Activated naive CD4-positive, alpha-beta T cell treated with anti-CD3 and anti-CD28 coated beads for 36 hours (primary cell): ENCODE measurements at regions of chr1 and their contacts with region 1.

Region 1: GRCh38 chr1:172638885-172639831 is 19.7 kb upstream of the FASLG start:
- DNase-seq: peak; percentile 90
- H3K4me3 Mint-ChIP-seq: peak overlapping the region; percentile 42
- H3K27ac Mint-ChIP-seq: peak overlapping the region; percentile 93
- H3K4me1 Mint-ChIP-seq: peaks cover 73% of the 10 kb centered on the region
- H3K27me3 Mint-ChIP-seq: peaks cover 9% of the 10 kb centered on the region

Region 2: DNA sequence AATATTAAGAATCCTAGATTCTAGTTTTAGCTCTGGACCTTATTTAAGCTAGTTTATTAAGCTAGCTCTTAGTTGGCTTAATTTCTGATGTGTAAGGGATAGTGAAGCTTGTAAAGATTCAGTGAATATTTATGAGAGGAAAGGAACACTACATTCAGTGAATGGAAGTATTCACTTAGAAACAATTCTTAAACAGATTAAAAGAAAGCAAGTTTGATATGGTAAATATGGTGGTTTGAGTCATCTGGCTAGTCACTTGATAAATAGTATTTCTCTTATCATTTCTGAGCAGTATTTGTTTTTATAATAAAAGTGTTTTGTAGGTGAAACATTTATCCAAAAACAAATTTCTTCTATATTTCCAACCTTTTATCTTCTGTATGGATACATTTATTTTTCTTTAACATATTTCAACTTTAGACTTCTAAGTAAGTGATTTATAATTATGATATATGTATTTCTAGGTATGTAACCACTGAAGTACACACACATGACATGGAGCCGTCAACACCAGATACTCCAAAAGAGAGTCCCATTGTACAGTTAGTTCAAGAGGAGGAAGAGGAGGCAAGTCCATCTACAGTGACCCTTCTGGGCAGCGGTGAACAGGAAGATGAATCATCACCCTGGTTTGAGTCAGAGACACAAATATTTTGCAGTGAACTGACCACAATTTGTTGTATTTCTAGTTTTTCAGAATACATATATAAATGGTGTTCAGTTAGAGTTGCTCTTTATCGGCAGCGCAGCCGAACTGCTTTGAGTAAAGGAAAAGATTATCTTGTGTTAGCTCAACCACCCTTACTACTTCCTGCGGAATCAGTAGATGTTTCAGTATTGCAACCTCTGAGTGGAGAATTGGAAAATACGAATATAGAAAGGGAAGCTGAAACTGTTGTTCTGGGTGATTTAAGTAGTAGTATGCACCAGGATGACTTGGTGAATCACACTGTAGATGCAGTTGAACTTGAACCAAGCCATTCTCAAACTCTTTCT is 50.6 kb before region 1 on chr1:
- CTCF ChIA-PET with region 1: interaction called, 5 read pairs
- intact Hi-C with region 1: loop called (anchors 1 kb)
- DNase-seq: peak; percentile 14
- H3K4me3 Mint-ChIP-seq: no peak overlapping the region
- H3K27ac Mint-ChIP-seq: peak overlapping the region; percentile 16
- H3K4me1 Mint-ChIP-seq: peaks cover 23% of the 10 kb centered on the region
- H3K27me3 Mint-ChIP-seq: no peaks in the 10 kb centered on the region

Region 3: GRCh38 chr1:172662464-172663109 is 23.4 kb after region 1 on chr1:
- CTCF ChIA-PET with region 1: interaction called, 6 read pairs
- intact Hi-C with region 1: loop called (anchors 1 kb)
- DNase-seq: peak; percentile 96
- H3K4me3 Mint-ChIP-seq: peak overlapping the region; percentile 26
- H3K27ac Mint-ChIP-seq: peak overlapping the region; percentile 60
- H3K4me1 Mint-ChIP-seq: peaks cover 68% of the 10 kb centered on the region
- H3K27me3 Mint-ChIP-seq: peaks cover 3% of the 10 kb centered on the region

Region 4: GRCh38 chr1:172699111-172699510 is 60.0 kb after region 1 on chr1:
- CTCF ChIA-PET with region 1: interaction called, 3 read pairs
- intact Hi-C with region 1: loop called (anchors 1 kb)
- DNase-seq: peak; percentile 88
- H3K4me3 Mint-ChIP-seq: peak overlapping the region; percentile 36
- H3K27ac Mint-ChIP-seq: peak overlapping the region; percentile 89
- H3K4me1 Mint-ChIP-seq: peaks cover 53% of the 10 kb centered on the region
- H3K27me3 Mint-ChIP-seq: no peaks in the 10 kb centered on the region

Region 5: GRCh38 chr1:172719694-172720138 is 80.6 kb after region 1 on chr1:
- CTCF ChIA-PET with region 1: interaction called, 23 read pairs
- intact Hi-C with region 1: no loop called
- DNase-seq: no peak
- H3K4me3 Mint-ChIP-seq: no peak overlapping the region
- H3K27ac Mint-ChIP-seq: no peak overlapping the region
- H3K4me1 Mint-ChIP-seq: peaks cover 33% of the 10 kb centered on the region
- H3K27me3 Mint-ChIP-seq: peaks cover 3% of the 10 kb centered on the region

Region 6: GRCh38 chr1:173297798-173298391 is 658.7 kb after region 1 on chr1:
- CTCF ChIA-PET with region 1: no interaction called
- intact Hi-C with region 1: loop called (anchors 1 kb)
- DNase-seq: peak; percentile 76
- H3K4me3 Mint-ChIP-seq: no peak overlapping the region
- H3K27ac Mint-ChIP-seq: peak overlapping the region; percentile 2
- H3K4me1 Mint-ChIP-seq: peaks cover 41% of the 10 kb centered on the region
- H3K27me3 Mint-ChIP-seq: no peaks in the 10 kb centered on the region